ENCODE measurements at regions of chr6 and their contacts with region 1.

Region 1: DNA sequence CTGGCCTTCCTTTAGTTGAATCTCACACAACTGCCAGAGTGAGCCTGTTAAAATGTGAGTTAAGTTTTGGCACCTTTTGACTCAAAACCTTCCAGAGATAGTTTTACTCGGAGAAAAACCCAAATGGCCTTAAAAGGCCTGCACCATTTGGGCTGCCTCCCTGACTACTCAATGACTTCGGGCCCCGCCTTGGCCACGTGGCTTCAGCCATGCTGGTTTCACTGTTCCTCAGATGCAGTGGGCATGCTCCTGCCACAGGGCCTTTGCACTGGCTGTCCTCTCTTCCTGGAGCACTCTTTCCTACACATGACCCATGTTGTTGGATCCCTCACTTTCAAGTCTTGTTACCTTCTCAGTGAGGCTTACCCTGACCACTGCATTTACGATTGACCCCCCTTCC is 18.3 kb downstream of the VEGFA start:
- DNase-seq: no peak
- ATAC-seq: no peak
- H3K4me3 ChIP-seq: no peak overlapping the region
- H3K4me3 Mint-ChIP-seq: no peak overlapping the region
- H3K27ac ChIP-seq: no peak overlapping the region
- H3K27ac Mint-ChIP-seq: no peak overlapping the region
- H3K4me1 ChIP-seq: no peaks in the 10 kb centered on the region
- H3K4me1 Mint-ChIP-seq: no peaks in the 10 kb centered on the region
- H3K27me3 ChIP-seq: peaks cover 0 to 14% of the 10 kb centered on the region in 2 experiments
- H3K27me3 Mint-ChIP-seq: no peaks in the 10 kb centered on the region

Region 2: GRCh38 chr6:43769526-43770416 is 18.5 kb before region 1 on chr6 and contains the start of gene VEGFA:
- CTCF ChIA-PET with region 1: no interaction called
- POLR2A ChIA-PET with region 1: no interaction called
- DNase-seq: peak; percentile 66 to 93 (median 83)
- ATAC-seq: peak; percentile 77 to 85 (median 81)
- H3K4me3 ChIP-seq: peak within 1 kb of the TSS; percentile 49 to 88
- H3K4me3 Mint-ChIP-seq: peak within 1 kb of the TSS; percentile 86 to 92 (median 89)
- H3K27ac ChIP-seq: no peak within 1 kb of the TSS
- H3K27ac Mint-ChIP-seq: peak within 1 kb of the TSS in 1 of 2 donors; percentile 9
- H3K4me1 ChIP-seq: peaks cover 2 to 31% of the 10 kb centered on the region in 2 experiments
- H3K4me1 Mint-ChIP-seq: peaks cover 8 to 20% (median 15%) of the 10 kb centered on the region in 3 donors
- H3K27me3 ChIP-seq: peaks cover 0 to 62% of the 10 kb centered on the region in 2 experiments
- H3K27me3 Mint-ChIP-seq: peaks cover 16 to 27% of the 10 kb centered on the region in 2 donors
- total RNA-seq, gene VEGFA: 1.1 to 8.9 (median 6.4) TPM

Region 3: GRCh38 chr6:43809417-43810291 is 21.3 kb after region 1 on chr6:
- CTCF ChIA-PET with region 1: no interaction called
- POLR2A ChIA-PET with region 1: no interaction called
- DNase-seq: no peak
- ATAC-seq: no peak
- H3K4me3 ChIP-seq: no peak overlapping the region
- H3K4me3 Mint-ChIP-seq: no peak overlapping the region
- H3K27ac ChIP-seq: no peak overlapping the region
- H3K27ac Mint-ChIP-seq: no peak overlapping the region
- H3K4me1 ChIP-seq: peaks cover 0 to 16% of the 10 kb centered on the region in 2 experiments
- H3K4me1 Mint-ChIP-seq: peaks cover 6 to 11% (median 10%) of the 10 kb centered on the region in 3 donors
- H3K27me3 ChIP-seq: peaks cover 0 to 3% of the 10 kb centered on the region in 2 experiments
- H3K27me3 Mint-ChIP-seq: no peaks in the 10 kb centered on the region

Region 4: GRCh38 chr6:43880236-43881137 is 92.2 kb after region 1 on chr6:
- CTCF ChIA-PET with region 1: no interaction called
- POLR2A ChIA-PET with region 1: interaction called in 1 of 2 experiments, 12 read pairs
- DNase-seq: no peak
- ATAC-seq: no peak
- H3K4me3 ChIP-seq: no peak overlapping the region
- H3K4me3 Mint-ChIP-seq: no peak overlapping the region
- H3K27ac ChIP-seq: no peak overlapping the region
- H3K27ac Mint-ChIP-seq: no peak overlapping the region
- H3K4me1 ChIP-seq: no peaks in the 10 kb centered on the region
- H3K4me1 Mint-ChIP-seq: no peaks in the 10 kb centered on the region
- H3K27me3 ChIP-seq: peaks cover 0 to 11% of the 10 kb centered on the region in 2 experiments
- H3K27me3 Mint-ChIP-seq: no peaks in the 10 kb centered on the region

Region 5: GRCh38 chr6:44217332-44218143 is 429.2 kb after region 1 on chr6:
- CTCF ChIA-PET with region 1: no interaction called
- POLR2A ChIA-PET with region 1: interaction called in 1 of 2 experiments, 13 read pairs
- DNase-seq: no peak
- ATAC-seq: no peak
- H3K4me3 ChIP-seq: no peak overlapping the region
- H3K4me3 Mint-ChIP-seq: no peak overlapping the region
- H3K27ac ChIP-seq: no peak overlapping the region
- H3K27ac Mint-ChIP-seq: no peak overlapping the region
- H3K4me1 ChIP-seq: peaks cover 4 to 21% of the 10 kb centered on the region in 2 experiments
- H3K4me1 Mint-ChIP-seq: peaks cover 6 to 27% (median 14%) of the 10 kb centered on the region in 3 donors
- H3K27me3 ChIP-seq: peaks cover 0 to 45% of the 10 kb centered on the region in 2 experiments
- H3K27me3 Mint-ChIP-seq: peaks cover 0 to 17% of the 10 kb centered on the region in 2 donors